WTC11 (cell line): ENCODE measurements at regions of chr19 and their contacts with region 1.

Region 1: GRCh38 chr19:13861732-13862531 is 15.0 kb upstream of the NANOS3 start:
- DNase-seq: peak; percentile 95
- ATAC-seq: peak; percentile 79
- H3K4me3 Mint-ChIP-seq: peak overlapping the region; percentile 75
- H3K27ac Mint-ChIP-seq: no peak overlapping the region; the same call in 1 of the 2 replicates
- H3K4me1 Mint-ChIP-seq: peaks cover 13% of the 10 kb centered on the region
- H3K27me3 Mint-ChIP-seq: peaks cover 42% of the 10 kb centered on the region
- CTCF ChIP-seq: peak; percentile 99

Region 2: GRCh38 chr19:13748169-13748828 is 113.6 kb before region 1 on chr19:
- CTCF ChIA-PET with region 1: interaction called, 10 read pairs
- POLR2A ChIA-PET with region 1: interaction called, 3 read pairs
- DNase-seq: no peak
- ATAC-seq: no peak
- H3K4me3 Mint-ChIP-seq: peak overlapping the region; percentile 96
- H3K27ac Mint-ChIP-seq: peak overlapping the region; percentile 92
- H3K4me1 Mint-ChIP-seq: peaks cover 9% of the 10 kb centered on the region
- H3K27me3 Mint-ChIP-seq: no peaks in the 10 kb centered on the region; the same call in 1 of the 2 replicates
- CTCF ChIP-seq: no peak

Region 3: DNA sequence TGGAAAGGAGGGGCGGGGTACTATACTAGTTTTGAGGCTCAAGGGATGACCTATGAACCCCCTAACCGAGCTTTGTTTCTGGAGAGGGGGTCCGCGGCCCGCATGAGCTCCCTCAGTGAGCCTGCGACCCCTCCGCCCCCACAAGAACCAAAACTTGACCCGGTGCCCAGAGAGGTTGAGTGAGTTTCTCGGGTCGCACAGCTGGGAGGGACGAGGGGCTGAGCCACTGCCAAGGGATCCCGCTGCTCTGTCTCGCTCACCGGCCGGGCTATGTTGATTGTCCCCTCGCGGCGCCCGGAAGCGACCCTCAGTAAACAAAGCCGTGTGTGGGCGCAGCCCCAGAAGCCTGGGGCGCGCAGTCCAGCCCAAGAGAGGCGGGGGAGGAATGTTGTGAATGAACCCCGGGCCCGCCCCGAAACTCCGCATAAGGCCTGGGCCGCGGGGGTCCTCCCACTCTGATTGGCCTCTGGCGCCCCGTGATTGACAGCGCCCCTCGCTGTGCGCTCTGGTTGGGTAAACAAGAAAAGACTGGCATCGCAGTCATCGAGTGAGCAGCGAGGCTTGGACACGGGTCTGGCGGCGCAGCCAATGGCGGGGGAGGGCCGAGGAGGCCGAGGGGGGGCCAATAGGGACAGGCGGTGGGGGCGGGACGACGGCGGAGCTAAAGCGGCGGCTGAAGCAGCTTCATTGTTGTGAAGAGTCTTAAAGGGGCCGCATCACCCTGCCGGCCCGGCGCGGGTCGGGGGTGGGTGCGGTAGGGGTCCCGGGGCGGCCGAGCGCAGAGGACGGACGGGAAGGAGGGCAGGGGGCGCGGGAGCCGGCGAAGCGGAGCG is 67.0 kb before region 1 on chr19 and contains the start of gene ZSWIM4:
- CTCF ChIA-PET with region 1: interaction called, 27 read pairs
- POLR2A ChIA-PET with region 1: interaction called, 6 read pairs
- DNase-seq: peak; percentile 100
- ATAC-seq: peak; percentile 91
- H3K4me3 Mint-ChIP-seq: peak within 1 kb of the TSS; percentile 92
- H3K27ac Mint-ChIP-seq: peak within 1 kb of the TSS; percentile 98
- H3K4me1 Mint-ChIP-seq: peaks cover 16% of the 10 kb centered on the region
- H3K27me3 Mint-ChIP-seq: no peaks in the 10 kb centered on the region
- CTCF ChIP-seq: no peak
- total RNA-seq, gene ZSWIM4: 33.4 to 35.5 TPM (median 34.2 TPM) in 3 replicates

Region 4: DNA sequence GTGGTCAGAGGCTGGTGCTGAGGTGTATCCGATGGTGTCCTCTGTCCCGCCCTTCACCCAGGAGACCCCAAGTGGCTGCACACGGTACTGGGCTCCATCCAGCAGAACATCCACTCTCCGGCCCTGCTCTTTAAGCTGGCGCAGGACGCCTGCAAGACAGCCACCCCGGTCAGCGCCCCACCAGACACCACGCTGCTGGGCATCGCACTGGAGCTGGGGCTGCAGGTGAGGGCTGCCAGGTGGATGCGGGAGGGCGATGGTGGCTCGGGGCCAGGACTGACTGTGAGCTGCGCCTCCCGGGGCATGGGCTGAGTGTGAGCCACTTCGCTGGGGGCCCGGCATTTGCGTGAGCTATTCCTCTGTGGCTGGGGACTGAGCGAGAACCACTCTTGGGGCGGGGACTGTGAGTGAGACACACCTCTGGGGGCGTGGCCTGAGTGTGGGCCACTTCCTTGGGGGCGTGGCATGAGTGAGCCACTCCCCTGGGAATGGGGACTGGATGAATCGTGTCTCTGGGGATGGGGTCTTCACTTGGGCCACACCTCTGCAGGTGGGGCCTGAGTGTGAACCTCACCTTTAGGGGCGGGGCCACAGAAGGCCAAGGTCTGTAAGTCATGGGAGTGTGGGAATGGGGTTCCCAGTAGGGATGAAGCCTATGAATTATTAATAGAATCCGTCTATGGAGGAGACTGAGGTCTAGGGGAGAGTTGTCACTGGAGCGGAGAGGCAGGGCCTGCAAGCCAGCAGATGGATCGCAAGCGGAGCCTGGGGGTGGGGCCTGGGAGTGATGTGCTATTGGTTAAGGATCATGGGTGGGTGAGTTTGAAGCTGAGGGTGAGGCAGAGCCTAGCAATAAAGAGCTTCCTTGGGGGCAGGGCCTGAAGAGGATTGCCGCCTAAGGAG is 36.2 kb before region 1 on chr19:
- CTCF ChIA-PET with region 1: interaction called, 19 read pairs
- POLR2A ChIA-PET with region 1: no interaction called
- DNase-seq: peak; percentile 94
- ATAC-seq: peak; percentile 86
- H3K4me3 Mint-ChIP-seq: peak overlapping the region; percentile 37; the same call in 1 of the 2 replicates
- H3K27ac Mint-ChIP-seq: peak overlapping the region; percentile 92
- H3K4me1 Mint-ChIP-seq: peaks cover 15% of the 10 kb centered on the region
- H3K27me3 Mint-ChIP-seq: no peaks in the 10 kb centered on the region
- CTCF ChIP-seq: 0 out of 2 replicates have a peak, but pooled peaks have one; percentile 35

Region 5: DNA sequence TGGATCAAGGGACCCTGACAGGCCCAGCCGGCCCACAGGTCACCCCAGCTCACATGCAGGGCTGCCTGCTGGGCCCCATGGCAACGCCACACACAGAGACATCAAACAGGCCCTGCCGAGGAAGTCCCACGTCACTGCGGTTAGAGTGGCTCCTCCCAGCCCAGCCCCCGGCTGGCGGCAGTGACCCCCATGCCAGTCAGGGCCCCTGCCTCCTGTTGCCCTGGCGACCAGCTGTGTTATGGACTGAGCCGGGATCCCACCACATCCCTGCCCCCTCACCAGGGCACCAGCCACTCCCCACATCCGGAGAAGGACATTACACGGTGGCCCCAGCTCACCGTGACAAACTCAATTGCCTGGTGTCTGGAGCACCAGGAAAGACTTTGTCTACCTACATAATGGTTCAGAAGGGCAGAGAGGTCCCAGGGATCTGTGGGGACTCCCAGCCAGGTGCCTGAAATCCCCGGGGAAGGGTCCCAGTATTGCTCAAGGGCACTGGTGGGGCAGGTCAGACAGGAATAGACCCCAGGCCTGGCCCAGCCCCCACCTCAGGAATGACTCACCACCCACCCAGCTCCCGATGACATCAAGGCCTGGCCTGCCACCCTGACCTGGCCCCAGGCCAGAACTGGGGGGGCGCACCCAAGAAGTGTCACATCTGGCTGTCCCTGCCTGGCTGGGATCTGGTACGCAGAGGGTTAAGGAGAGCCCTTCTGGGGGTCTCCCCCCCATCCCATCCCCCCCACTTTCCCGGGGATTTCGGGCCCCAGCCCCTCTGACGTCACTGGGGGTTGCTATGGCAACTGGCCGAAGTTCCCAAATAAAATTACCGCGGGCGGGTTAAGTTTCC is 15.2 kb before region 1 on chr19:
- CTCF ChIA-PET with region 1: interaction called, 41 read pairs
- POLR2A ChIA-PET with region 1: interaction called, 26 read pairs
- DNase-seq: peak; percentile 89
- ATAC-seq: peak; percentile 33
- H3K4me3 Mint-ChIP-seq: peak overlapping the region; percentile 64
- H3K27ac Mint-ChIP-seq: peak overlapping the region; percentile 98
- H3K4me1 Mint-ChIP-seq: peaks cover 40% of the 10 kb centered on the region
- H3K27me3 Mint-ChIP-seq: no peaks in the 10 kb centered on the region; the same call in 1 of the 2 replicates
- CTCF ChIP-seq: no peak

Region 6: DNA sequence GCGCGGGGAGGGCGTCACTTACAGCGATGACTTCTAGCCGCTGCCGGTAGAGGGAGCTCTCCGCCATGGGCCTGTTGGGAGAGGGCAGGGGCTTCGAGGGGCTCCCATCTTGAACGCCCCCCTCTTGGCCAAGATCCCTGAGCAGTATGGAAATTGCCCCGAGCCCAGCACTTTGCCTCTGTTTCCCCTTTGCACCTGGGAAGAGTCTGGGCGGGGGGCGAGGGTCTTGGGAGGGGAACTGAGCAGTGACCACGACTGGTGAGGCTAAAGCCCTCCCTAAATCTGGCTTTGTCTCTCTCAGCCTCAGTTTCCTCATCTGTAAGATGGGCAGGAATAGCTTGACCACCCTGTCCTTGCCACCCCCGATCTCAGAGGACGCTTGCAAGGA is 197.2 kb after region 1 on chr19:
- CTCF ChIA-PET with region 1: interaction called, 13 read pairs
- POLR2A ChIA-PET with region 1: no interaction called
- DNase-seq: peak; percentile 78
- ATAC-seq: peak; percentile 50
- H3K4me3 Mint-ChIP-seq: peak overlapping the region; percentile 86
- H3K27ac Mint-ChIP-seq: no peak overlapping the region
- H3K4me1 Mint-ChIP-seq: peaks cover 16% of the 10 kb centered on the region
- H3K27me3 Mint-ChIP-seq: peaks cover 32% of the 10 kb centered on the region
- CTCF ChIP-seq: peak; percentile 87